K562 (cell line): ENCODE measurements at regions of chr2 and their contacts with region 1.

Region 1: DNA sequence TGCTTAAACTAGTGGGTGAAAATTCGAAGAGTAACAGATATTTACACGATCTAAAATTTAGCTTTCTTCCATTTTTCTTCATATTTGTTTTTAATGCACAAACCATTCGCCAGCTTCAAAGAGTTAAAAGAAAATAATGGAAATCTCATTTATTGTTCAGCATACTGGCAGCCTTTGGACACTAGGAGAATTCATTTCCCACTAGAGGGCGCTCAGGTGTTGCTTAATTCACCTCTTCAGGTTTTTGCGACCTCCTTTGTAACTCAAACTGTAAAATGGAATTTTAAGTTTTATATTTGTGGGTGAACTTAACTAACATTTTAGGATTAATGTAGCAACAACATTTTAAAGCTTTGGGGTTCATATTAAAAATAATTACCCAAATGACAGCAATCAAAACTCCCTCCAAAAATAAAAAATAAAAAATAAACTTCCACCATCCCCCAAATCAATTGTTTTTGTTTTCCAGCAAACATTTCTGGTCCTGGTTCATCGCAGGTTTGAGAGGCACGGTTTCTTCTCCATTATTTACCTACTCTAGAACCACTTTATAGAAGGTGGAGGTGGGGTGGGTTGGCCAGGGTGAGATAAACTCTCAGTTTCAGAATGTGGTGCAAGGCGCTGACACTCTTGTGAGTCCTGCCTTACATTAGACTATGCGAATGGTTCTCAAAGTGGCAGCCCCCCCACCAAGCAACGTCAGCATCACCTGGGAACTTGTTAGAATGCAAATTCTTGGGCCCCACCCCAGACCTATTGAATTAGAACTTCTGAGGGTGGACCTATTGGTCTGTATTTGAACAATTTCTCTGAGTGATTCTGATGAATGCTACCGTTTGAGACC is 24.7 kb upstream of the PNPT1 start:
- DNase-seq: peak; percentile 45 to 81 (median 52)
- ATAC-seq: peak; percentile 92
- H3K4me3 ChIP-seq: no peak overlapping the region
- H3K27ac ChIP-seq: no peak overlapping the region
- H3K4me1 ChIP-seq: no peaks in the 10 kb centered on the region
- H3K27me3 ChIP-seq: peaks cover 2 to 15% of the 10 kb centered on the region in 2 experiments; a peak in 4 of 5 replicates
- CTCF ChIP-seq: peak; percentile 74 to 88 (median 78)
- EP300 ChIP-seq: 0 out of 2 replicates have a peak, but pooled peaks have one; percentile 8
- POLR2A ChIP-seq: no peak
- RAD21 ChIP-seq: peak; percentile 89 to 90

Region 2: GRCh38 chr2:55875434-55876135 is 157.2 kb after region 1 on chr2:
- CTCF ChIA-PET with region 1: no interaction called
- POLR2A ChIA-PET with region 1: no interaction called
- in situ Hi-C with region 1: no loop called
- intact Hi-C with region 1: loop called (anchors 10 kb)
- DNase-seq: no peak
- ATAC-seq: no peak
- H3K4me3 ChIP-seq: no peak overlapping the region
- H3K27ac ChIP-seq: no peak overlapping the region
- H3K4me1 ChIP-seq: no peaks in the 10 kb centered on the region; a peak in 1 of 5 replicates
- H3K27me3 ChIP-seq: 0 out of 5 replicates have a peak, but pooled peaks cover 0 to 2% of the 10 kb centered on the region in 2 experiments
- CTCF ChIP-seq: no peak
- EP300 ChIP-seq: no peak
- POLR2A ChIP-seq: no peak
- RAD21 ChIP-seq: no peak

Region 3: DNA sequence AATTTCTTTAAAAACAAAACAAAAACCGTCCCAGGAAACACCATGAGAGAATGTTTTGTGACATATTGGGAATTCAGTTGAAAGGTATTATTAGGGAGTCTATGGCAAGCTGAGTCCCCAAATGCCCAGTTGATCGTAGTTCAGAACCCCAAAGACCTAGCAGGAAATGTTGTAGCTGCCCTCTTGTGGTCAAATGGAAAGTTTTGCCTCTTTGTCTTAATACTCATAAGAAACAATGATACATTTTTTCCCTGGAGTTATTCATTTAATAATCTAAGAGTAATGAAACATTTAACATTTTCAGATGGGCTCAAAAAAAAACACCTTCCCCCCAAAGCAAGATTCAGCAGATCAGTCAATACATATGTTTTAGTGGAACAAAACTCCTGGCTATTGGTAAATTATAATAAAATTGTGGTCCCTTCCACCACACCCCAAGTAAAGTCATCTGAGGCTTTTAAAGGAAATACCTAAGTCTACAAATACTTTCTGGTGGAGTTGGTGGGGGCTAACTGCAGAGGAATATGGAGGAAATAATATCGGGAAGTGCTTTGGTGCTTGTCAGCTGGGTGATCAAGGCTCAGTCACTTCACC is 243.0 kb after region 1 on chr2:
- CTCF ChIA-PET with region 1: interaction called, 9 read pairs
- POLR2A ChIA-PET with region 1: no interaction called
- in situ Hi-C with region 1: no loop called
- intact Hi-C with region 1: loop called (anchors 2 kb)
- DNase-seq: peak; percentile 31 to 48 (median 40)
- ATAC-seq: peak; percentile 76
- H3K4me3 ChIP-seq: no peak overlapping the region
- H3K27ac ChIP-seq: no peak overlapping the region
- H3K4me1 ChIP-seq: no peaks in the 10 kb centered on the region; a peak in 1 of 5 replicates
- H3K27me3 ChIP-seq: no peaks in the 10 kb centered on the region; a peak in 1 of 5 replicates
- CTCF ChIP-seq: peak; percentile 37 to 69 (median 52); a peak in 5 of 6 replicates
- EP300 ChIP-seq: no peak
- POLR2A ChIP-seq: no peak
- RAD21 ChIP-seq: peak; percentile 69 to 77

Region 4: GRCh38 chr2:56132138-56132537 is 413.8 kb after region 1 on chr2:
- CTCF ChIA-PET with region 1: interaction called, 5 read pairs
- POLR2A ChIA-PET with region 1: no interaction called
- in situ Hi-C with region 1: loop called (anchors 10 kb)
- intact Hi-C with region 1: loop called (anchors 2 kb)
- DNase-seq: peak; percentile 25 to 65 (median 34)
- ATAC-seq: no peak
- H3K4me3 ChIP-seq: no peak overlapping the region
- H3K27ac ChIP-seq: no peak overlapping the region
- H3K4me1 ChIP-seq: peaks cover 5 to 26% of the 10 kb centered on the region in 2 experiments; a peak in 4 of 5 replicates
- H3K27me3 ChIP-seq: no peaks in the 10 kb centered on the region
- CTCF ChIP-seq: peak; percentile 28 to 68 (median 45); a peak in 4 of 6 replicates
- EP300 ChIP-seq: no peak
- POLR2A ChIP-seq: no peak
- RAD21 ChIP-seq: peak; percentile 68 to 74

Region 5: GRCh38 chr2:57516698-57517340 is 1798.4 kb after region 1 on chr2:
- CTCF ChIA-PET with region 1: no interaction called
- POLR2A ChIA-PET with region 1: no interaction called
- in situ Hi-C with region 1: loop called (anchors 25 kb)
- intact Hi-C with region 1: no loop called
- DNase-seq: peak; percentile 24 to 37 (median 33)
- ATAC-seq: peak; percentile 74
- H3K4me3 ChIP-seq: no peak overlapping the region
- H3K27ac ChIP-seq: no peak overlapping the region
- H3K4me1 ChIP-seq: no peaks in the 10 kb centered on the region
- H3K27me3 ChIP-seq: no peaks in the 10 kb centered on the region
- CTCF ChIP-seq: peak in 2 of 3 experiments; percentile 40 to 69; a peak in 3 of 6 replicates
- EP300 ChIP-seq: no peak
- POLR2A ChIP-seq: no peak
- RAD21 ChIP-seq: peak; percentile 58 to 77